Activated naive CD4-positive, alpha-beta T cell treated with anti-CD3 and anti-CD28 coated beads for 36 hours (primary cell): ENCODE measurements at regions of chr3 and their contacts with region 1.

Region 1: GRCh38 chr3:146640955-146641867 is 36.1 kb upstream of the PLSCR5 start:
- DNase-seq: peak; percentile 19
- H3K4me3 Mint-ChIP-seq: no peak overlapping the region
- H3K27ac Mint-ChIP-seq: no peak overlapping the region
- H3K4me1 Mint-ChIP-seq: no peaks in the 10 kb centered on the region
- H3K27me3 Mint-ChIP-seq: peaks cover 3% of the 10 kb centered on the region

Region 2: DNA sequence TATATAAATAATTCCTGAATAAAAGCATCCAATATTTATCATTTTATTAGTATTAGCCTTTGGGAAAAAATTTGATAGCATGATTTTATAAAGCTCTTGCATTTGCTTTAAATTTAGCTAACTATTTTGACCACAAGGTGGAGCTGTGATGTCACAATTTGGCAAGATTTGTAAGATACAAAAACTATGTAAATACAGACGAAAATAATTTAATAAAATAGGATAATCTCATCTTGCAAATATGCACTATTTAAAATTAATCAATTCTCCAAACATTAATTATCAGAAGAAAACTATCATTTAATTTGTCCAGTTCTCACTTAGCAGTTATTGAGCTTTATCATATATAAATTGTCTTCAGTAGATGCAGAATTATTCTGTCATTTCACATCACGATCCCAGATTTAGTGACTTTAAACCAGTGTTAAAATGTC is 575.6 kb before region 1 on chr3:
- CTCF ChIA-PET with region 1: interaction called, 3 read pairs
- intact Hi-C with region 1: loop called (anchors 2 kb)
- DNase-seq: peak; percentile 26
- H3K4me3 Mint-ChIP-seq: no peak overlapping the region
- H3K27ac Mint-ChIP-seq: no peak overlapping the region
- H3K4me1 Mint-ChIP-seq: no peaks in the 10 kb centered on the region
- H3K27me3 Mint-ChIP-seq: no peaks in the 10 kb centered on the region

Region 3: DNA sequence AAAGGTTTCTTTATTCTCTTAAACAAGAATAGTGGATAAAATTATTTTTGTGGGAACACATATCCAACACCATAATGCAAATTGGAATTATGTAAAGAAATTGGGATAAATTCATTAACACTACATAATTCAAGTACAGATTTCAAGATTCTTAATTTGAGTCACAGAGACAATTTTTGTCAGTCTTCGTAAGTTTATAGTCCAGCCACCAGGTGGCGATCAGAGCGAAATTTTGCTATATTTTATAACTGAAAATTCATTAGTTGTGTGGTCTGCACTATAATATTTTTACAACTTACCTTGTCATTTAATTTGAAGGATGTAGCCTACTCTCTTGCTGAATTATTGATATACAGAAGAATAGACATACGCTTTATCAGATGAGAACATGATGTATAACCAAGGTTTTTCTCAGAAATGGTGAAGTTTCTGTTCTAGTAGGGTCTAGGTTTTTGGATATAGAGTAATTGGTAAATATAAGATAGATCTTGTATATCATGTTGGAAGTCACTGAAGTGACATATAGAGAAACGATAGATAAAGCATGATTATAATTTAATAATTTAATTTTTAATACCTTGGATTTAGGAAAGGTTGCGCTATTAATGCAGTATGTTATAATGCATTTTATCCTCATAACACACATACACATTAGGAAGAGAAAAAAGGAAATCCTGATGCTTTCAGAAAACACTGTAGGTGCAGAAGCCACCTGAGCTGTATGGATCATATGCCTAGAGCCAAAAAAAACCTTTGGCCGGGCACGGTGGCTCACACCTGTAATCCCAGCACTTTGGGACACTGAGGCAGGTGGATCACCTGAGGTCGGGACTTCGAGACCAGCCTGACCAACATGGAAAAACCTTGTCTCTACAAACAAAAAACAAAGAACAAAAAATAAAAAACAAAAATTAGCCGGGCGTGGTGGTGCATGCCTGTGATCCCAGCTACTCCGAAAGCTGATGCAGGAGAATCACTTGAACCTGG is 422.0 kb before region 1 on chr3:
- CTCF ChIA-PET with region 1: no interaction called
- intact Hi-C with region 1: loop called (anchors 1 kb)
- DNase-seq: peak; percentile 60
- H3K4me3 Mint-ChIP-seq: no peak overlapping the region
- H3K27ac Mint-ChIP-seq: no peak overlapping the region
- H3K4me1 Mint-ChIP-seq: no peaks in the 10 kb centered on the region
- H3K27me3 Mint-ChIP-seq: peaks cover 4% of the 10 kb centered on the region

Region 4: GRCh38 chr3:146557492-146558144 is 83.6 kb before region 1 on chr3:
- CTCF ChIA-PET with region 1: no interaction called
- intact Hi-C with region 1: no loop called
- DNase-seq: no peak
- H3K4me3 Mint-ChIP-seq: no peak overlapping the region
- H3K27ac Mint-ChIP-seq: no peak overlapping the region
- H3K4me1 Mint-ChIP-seq: peaks cover 7% of the 10 kb centered on the region
- H3K27me3 Mint-ChIP-seq: no peaks in the 10 kb centered on the region

Region 5: DNA sequence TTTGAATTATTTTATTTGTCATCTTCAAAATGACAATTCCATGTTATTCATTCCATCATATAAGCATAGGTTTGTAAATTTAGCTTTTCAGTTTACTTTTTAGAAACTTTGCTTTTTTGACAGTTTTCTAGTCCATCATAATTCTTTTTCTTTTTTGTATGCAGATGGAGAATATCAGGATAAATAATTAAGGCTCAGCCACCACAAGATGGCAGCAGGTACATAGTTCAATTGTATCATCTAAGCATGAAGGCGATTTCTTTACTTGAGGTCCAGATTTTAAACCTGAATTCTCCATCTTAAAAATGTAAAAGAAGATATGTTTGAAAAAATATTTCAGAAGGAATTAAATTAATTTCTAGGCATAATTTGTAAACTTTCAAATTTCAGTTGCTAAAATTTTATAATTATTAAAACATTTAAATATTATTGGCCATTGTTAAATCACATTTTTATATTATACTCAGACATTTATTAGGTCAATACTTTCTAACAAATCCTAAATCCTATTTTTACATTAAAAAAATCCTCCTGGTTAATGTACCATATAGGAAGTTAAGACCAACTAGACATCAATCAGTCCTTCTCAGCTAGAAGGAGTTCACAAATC is 51.2 kb before region 1 on chr3:
- CTCF ChIA-PET with region 1: interaction called, 4 read pairs
- intact Hi-C with region 1: loop called (anchors 1 kb)
- DNase-seq: peak; percentile 49
- H3K4me3 Mint-ChIP-seq: no peak overlapping the region
- H3K27ac Mint-ChIP-seq: no peak overlapping the region
- H3K4me1 Mint-ChIP-seq: no peaks in the 10 kb centered on the region
- H3K27me3 Mint-ChIP-seq: peaks cover 6% of the 10 kb centered on the region

Region 6: DNA sequence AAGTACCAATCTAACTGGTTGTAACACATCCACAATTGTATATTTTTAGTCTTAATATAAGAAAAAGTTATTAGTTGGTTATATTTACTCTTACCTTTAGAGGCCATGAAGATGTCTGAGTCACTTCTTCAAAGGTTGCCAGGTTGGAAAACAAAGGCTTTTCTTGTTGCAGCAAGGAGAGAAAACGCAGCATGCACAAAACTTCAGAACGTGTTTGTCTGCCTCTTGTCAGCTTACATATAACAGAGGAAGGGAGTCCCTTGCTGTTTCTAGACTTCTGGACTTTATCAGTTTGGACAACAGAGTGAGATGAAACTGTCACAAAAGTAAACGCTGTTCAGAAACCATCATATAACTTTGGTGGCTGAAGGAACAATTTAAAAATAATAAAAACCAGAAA is 36.1 kb before region 1 on chr3 and contains the start of gene PLSCR5:
- CTCF ChIA-PET with region 1: no interaction called
- intact Hi-C with region 1: no loop called
- DNase-seq: no peak
- H3K4me3 Mint-ChIP-seq: no peak within 1 kb of the TSS
- H3K27ac Mint-ChIP-seq: no peak within 1 kb of the TSS
- H3K4me1 Mint-ChIP-seq: no peaks in the 10 kb centered on the region
- H3K27me3 Mint-ChIP-seq: peaks cover 16% of the 10 kb centered on the region
- total RNA-seq, gene PLSCR5: not detected

Region 7: DNA sequence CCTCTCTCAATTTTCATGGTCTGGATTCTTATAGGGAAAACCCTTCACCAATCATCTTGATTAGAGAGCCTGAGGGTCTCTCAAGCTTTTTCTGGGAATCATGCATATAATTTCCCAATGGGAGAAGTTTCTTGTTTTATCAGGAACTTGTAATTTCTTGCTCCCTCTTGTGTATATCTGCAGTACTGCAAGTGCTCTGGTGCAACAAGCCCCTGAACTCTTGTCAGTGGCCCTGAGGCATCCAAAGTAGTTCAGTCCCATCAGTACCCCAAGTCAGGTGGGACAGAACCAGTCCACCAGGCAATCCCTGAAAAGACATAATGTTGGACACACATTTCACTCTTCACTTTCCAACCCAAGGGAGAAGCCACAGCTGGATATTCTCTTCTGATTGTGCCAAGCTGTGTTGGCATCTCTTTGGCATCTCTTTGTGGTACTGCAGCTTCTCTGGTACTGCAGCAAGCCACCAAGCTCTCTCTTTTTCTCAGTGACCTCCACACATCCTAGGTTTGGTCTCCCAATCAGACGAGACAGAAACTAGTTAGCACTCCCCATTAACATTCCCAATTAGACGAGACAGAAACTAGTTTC is 550.7 kb after region 1 on chr3:
- CTCF ChIA-PET with region 1: no interaction called
- intact Hi-C with region 1: loop called (anchors 1 kb)
- DNase-seq: peak; percentile 4
- H3K4me3 Mint-ChIP-seq: no peak overlapping the region
- H3K27ac Mint-ChIP-seq: no peak overlapping the region
- H3K4me1 Mint-ChIP-seq: no peaks in the 10 kb centered on the region
- H3K27me3 Mint-ChIP-seq: no peaks in the 10 kb centered on the region

Region 8: DNA sequence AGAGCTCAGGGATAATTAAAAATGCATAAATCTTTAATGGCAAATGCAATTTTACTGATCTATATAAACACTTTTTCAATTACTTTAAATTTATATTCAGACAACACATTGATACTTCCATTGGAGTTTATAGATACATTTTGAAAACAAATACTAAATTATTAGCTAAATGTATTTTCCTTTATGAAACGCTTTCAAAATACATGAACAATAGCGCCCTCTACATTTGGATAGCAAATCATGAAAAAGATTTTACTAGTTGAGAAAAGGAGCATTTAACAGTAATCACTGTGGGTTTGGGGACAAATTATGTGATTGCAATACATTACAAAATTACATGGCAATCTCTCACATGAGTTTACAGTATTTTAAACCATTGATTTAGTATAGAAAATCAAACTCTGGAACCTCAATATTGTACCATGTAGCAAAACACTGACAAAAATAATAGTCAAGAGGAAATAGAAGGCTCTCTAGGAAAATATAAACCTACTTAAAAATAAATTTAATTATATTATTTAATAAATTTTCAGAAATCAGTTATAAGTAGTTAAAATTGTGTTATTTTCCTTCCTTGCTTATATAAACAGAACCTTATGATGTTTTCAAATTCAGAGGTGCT is 975.9 kb after region 1 on chr3:
- CTCF ChIA-PET with region 1: no interaction called
- intact Hi-C with region 1: loop called (anchors 10 kb)
- DNase-seq: no peak
- H3K4me3 Mint-ChIP-seq: no peak overlapping the region
- H3K27ac Mint-ChIP-seq: no peak overlapping the region
- H3K4me1 Mint-ChIP-seq: no peaks in the 10 kb centered on the region
- H3K27me3 Mint-ChIP-seq: no peaks in the 10 kb centered on the region

Region 9: DNA sequence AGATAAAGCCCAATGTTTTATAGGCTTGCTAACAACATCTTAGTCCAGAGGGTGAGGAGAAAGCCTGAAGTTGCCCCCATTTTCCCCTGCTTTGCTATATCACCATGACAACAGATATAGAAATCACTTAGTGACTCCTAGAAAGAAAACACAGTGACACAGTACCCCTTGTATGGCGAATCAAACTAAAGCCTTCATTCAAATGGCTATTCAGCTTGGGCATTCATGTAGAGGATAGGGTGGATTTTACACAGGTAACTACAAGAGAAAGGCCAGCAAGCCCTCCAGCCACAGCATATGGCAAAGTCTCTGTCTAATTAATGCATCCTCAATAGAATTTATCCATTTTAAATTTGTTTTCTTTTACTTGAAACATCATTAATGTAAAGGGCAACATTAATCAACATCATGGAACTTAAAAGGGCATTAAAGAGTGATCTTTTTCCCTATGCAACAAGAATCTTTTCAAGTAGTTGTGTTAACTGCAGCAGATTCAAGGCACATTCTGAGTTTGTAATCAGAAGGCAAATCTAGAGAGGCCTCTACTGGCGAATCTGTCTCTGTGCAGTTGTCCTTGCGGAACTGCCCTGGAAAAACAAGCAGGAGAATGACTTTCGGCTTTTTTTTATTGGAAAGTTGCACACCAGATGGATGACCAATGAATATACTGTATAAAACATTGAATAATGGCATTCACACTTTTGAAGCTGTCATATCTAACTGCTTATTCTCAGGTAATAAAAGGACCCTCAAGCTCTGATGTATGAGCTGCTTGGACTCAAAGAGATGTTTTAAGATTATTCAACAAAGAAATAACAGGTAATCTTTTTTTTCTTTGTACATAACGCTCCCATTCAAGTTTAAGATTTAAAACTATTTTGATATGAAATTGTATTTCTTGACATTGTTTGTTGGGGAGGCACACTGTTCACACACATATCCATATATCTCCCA is 1434.8 kb after region 1 on chr3:
- CTCF ChIA-PET with region 1: no interaction called
- intact Hi-C with region 1: loop called (anchors 5 kb)
- DNase-seq: no peak
- H3K4me3 Mint-ChIP-seq: no peak overlapping the region
- H3K27ac Mint-ChIP-seq: no peak overlapping the region
- H3K4me1 Mint-ChIP-seq: no peaks in the 10 kb centered on the region
- H3K27me3 Mint-ChIP-seq: no peaks in the 10 kb centered on the region